MCF 10A (cell line): ENCODE measurements at regions of chr3 and their contacts with region 1.

Region 1: DNA sequence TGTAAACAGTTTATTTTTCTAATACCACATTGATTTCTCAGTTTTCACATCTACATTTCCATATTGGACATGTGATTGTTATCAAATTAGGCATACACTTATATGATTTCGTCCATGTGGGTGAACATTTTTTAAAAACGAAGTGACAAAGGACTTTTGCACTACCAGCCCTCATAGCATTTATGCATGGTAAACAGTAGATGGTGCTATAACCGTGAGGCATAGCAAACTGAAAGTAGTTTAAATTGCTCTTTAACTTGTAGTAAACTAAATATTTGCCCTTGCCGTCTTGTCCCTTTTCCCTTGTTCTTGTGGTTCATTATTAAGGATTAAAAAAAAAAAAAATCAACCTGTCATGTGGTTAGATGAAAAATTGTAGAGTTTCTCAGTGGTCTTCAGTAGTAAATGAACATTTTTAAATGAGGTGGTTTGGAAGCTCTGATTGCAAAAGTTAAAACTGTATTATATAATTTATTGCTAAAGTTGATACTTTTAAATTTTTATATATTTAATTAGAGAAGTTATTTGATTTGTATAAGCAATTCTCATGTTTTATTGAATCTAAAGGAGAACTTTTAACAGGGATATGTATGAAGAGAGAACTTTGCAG is 24.0 kb downstream of the STX19 start:
- DNase-seq: peak; percentile 65
- H3K4me3 Mint-ChIP-seq: peak overlapping the region; percentile 63
- H3K27ac Mint-ChIP-seq: peak overlapping the region; percentile 77
- H3K4me1 Mint-ChIP-seq: no peaks in the 10 kb centered on the region
- H3K27me3 Mint-ChIP-seq: no peaks in the 10 kb centered on the region
- CTCF ChIP-seq: peak; percentile 70

Region 2: DNA sequence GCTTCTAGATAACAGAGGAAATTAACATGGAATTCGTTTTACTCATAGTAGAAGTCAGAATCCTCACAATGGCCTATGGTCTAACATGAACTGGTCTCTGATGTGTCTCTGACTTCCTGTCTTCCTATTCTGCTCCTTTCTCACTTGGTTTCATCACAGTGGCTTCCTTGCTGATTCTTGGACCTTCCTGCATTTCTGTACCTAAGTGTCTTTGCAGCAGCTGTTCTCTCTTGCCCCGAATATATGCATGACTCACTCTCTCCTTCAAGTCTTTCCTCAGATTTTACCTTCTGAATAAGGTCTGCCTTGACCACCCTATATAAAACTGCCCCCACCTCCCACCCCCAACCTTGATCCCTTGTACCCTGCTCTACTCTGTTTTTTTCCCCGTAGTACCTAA is 10.3 kb before region 1 on chr3:
- CTCF ChIA-PET with region 1: interaction called, 24 read pairs
- POLR2A ChIA-PET with region 1: interaction called, 3 read pairs
- intact Hi-C with region 1: no loop called
- DNase-seq: peak; percentile 17
- H3K4me3 Mint-ChIP-seq: no peak overlapping the region
- H3K27ac Mint-ChIP-seq: no peak overlapping the region
- H3K4me1 Mint-ChIP-seq: peaks cover 7% of the 10 kb centered on the region
- H3K27me3 Mint-ChIP-seq: no peaks in the 10 kb centered on the region
- CTCF ChIP-seq: no peak

Region 3: GRCh38 chr3:94015025-94015424 is 10.6 kb after region 1 on chr3:
- CTCF ChIA-PET with region 1: interaction called, 16 read pairs
- POLR2A ChIA-PET with region 1: interaction called, 3 read pairs
- intact Hi-C with region 1: no loop called
- DNase-seq: no peak
- H3K4me3 Mint-ChIP-seq: no peak overlapping the region
- H3K27ac Mint-ChIP-seq: no peak overlapping the region
- H3K4me1 Mint-ChIP-seq: peaks cover 5% of the 10 kb centered on the region
- H3K27me3 Mint-ChIP-seq: no peaks in the 10 kb centered on the region
- CTCF ChIP-seq: no peak

Region 4: GRCh38 chr3:94069194-94069813 is 64.9 kb after region 1 on chr3:
- CTCF ChIA-PET with region 1: interaction called, 16 read pairs
- POLR2A ChIA-PET with region 1: no interaction called
- intact Hi-C with region 1: loop called (anchors 1 kb)
- DNase-seq: peak; percentile 27
- H3K4me3 Mint-ChIP-seq: no peak overlapping the region
- H3K27ac Mint-ChIP-seq: no peak overlapping the region
- H3K4me1 Mint-ChIP-seq: peaks cover 15% of the 10 kb centered on the region
- H3K27me3 Mint-ChIP-seq: no peaks in the 10 kb centered on the region
- CTCF ChIP-seq: peak; percentile 47